Activated CD4-positive, alpha-beta memory T cell treated with anti-CD3 and anti-CD28 coated beads for 36 hours (primary cell): ENCODE measurements at regions of chr20 and their contacts with region 1.

Region 1: GRCh38 chr20:50750145-50750671 is 18.8 kb downstream of the PARD6B start:
- DNase-seq: no peak
- H3K4me3 Mint-ChIP-seq: no peak overlapping the region
- H3K27ac Mint-ChIP-seq: no peak overlapping the region
- H3K4me1 Mint-ChIP-seq: peaks cover 26% of the 10 kb centered on the region
- H3K27me3 Mint-ChIP-seq: no peaks in the 10 kb centered on the region

Region 2: DNA sequence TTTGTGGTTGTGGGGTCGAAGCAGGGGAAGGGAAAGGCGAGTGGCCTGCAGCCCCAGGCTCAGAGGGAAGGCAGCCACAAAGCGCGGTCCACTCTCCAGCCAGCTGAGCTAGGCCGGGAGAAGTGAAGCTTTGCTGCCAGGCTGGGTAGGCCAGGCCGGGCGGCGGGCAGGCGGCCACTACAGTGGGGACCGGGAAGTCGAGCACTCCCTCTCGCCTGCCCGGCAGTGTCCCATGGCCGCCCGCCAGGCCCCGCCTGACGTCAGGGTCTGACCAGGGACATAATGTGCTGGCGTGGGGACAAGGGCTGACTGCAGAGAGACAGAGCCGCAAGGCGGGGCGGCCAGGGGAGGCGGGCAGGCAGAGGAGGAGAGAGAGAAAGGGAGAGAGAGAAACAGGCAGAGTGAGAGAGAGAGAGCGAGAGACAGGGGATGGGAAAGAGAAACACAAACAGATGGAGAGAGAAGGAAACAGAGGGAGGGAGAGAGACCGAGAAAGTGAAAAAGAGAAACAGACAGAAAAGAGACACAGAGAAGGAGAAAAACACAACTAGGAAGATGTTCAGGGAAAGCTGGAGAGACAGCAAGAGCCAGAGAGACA is 334.6 kb before region 1 on chr20:
- CTCF ChIA-PET with region 1: no interaction called
- POLR2A ChIA-PET with region 1: no interaction called
- intact Hi-C with region 1: no loop called
- DNase-seq: no peak
- H3K4me3 Mint-ChIP-seq: no peak overlapping the region
- H3K27ac Mint-ChIP-seq: no peak overlapping the region
- H3K4me1 Mint-ChIP-seq: no peaks in the 10 kb centered on the region
- H3K27me3 Mint-ChIP-seq: peaks cover 10% of the 10 kb centered on the region

Region 3: DNA sequence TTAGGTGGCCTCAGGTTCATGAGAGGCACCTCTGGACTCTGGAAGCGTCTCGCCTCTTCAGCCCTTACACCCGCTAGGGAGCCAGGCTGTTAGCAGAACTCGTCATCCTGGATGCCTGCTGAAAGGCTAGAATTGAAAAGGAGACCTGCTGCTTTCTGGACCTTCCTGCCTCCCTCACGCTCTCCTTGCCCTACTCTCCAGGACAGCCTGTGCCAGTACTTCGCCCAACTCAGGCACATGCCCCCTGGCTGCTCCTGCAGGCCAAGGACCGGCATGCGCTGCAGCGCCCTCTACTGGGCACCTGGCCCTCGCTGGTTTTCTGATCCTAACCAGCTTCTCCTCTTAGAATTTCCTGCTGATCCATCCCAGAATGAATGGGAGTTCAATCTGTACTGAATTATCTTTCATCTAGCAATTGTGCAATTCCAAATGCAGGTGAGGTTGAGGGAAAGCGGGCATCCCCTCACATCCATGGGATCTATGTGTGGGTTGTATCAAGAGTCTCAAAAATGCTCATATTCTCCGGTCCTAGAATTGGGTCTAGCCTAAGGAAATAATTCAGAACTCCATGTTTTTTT is 162.1 kb before region 1 on chr20:
- CTCF ChIA-PET with region 1: interaction called, 15 read pairs
- POLR2A ChIA-PET with region 1: no interaction called
- intact Hi-C with region 1: no loop called
- DNase-seq: peak; percentile 84
- H3K4me3 Mint-ChIP-seq: no peak overlapping the region
- H3K27ac Mint-ChIP-seq: no peak overlapping the region
- H3K4me1 Mint-ChIP-seq: peaks cover 3% of the 10 kb centered on the region
- H3K27me3 Mint-ChIP-seq: no peaks in the 10 kb centered on the region

Region 4: DNA sequence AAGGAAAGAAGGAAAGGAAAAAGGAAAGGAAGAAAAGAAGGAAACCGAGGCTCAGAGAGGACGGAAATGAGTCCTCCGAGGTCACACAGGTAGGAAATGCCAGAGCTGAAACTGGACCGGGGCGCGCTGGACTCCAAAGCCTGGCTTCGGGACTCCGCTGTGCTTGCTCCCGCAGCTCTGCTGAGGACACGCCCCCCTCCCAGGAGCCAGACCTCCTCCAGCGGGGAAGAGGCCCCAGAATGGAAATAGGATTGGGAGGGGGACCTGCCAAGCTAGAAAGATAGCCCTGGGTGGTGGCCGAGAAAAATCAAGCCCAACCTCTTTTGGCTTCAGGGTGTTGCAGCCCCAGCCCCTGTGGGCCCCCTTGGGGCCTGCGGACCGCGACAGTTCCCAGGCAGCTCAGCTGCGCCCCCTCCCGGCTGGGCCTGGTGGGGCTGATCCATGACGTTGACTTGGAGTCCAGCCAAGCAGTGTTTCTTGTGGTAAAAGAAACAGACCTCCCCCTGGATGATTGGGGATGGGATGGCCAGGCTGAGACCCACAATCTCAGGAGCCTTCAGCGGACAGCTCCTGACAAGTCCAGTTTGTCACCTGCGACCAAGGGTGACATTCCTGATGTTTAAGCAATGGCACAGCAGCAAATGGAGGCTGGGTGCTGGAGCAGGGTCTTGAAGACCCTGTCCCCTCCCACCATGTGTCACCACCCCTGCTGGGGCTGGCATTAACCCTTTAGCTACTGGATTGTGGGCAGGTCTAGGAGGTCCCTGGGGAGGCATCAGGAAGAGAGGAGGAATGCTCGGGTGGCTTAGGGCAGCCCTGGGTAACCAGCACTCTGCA is 114.3 kb before region 1 on chr20:
- CTCF ChIA-PET with region 1: interaction called, 10 read pairs
- POLR2A ChIA-PET with region 1: no interaction called
- intact Hi-C with region 1: loop called (anchors 10 kb)
- DNase-seq: peak; percentile 75
- H3K4me3 Mint-ChIP-seq: no peak overlapping the region
- H3K27ac Mint-ChIP-seq: no peak overlapping the region
- H3K4me1 Mint-ChIP-seq: no peaks in the 10 kb centered on the region
- H3K27me3 Mint-ChIP-seq: peaks cover 3% of the 10 kb centered on the region

Region 5: DNA sequence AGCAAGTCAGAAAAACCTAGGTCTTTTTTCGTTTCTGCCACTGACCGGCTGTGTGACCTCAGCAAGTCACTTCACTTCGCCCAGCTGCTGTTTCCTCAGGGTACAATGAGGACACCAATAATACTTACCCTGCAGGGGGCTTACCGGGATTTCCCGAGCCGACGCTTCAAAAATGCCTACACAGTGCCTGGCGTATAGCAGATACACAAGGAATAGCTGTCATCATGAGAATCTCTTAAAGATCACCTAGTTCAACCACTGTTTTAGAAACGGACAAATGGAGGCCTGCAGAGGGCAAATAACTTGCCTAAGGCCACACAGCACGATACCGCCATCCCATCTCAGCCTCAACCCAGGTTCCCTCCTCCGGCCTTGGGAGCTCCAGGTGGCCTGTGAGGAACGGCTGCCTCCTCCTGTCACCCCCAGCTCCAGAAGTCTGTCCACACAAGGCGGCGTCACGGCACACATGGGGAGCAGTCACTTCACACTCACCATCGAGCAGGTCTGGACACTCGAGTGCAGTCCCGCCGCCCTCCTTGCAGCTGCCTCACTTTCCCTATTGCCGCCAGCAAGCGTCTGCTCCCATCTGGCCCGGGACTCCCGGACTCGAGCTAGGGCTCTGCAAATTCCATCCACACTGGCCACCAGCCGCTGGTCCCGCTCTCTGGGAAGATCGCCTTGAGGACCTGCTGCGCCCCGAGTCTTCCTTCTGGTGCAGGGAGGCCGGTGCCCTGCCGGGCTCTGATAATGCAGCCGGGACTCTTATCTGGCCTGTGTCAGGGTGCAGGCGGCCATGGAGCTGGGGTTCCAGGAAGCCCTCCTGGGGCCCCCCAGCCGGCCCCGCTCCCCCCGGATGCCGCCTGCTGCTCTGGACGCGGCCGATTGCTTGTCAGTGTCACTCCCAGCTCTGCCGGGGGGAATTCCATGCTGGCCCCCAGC is 59.3 kb before region 1 on chr20 and contains the start of gene RIPOR3:
- CTCF ChIA-PET with region 1: interaction called, 18 read pairs
- POLR2A ChIA-PET with region 1: no interaction called
- intact Hi-C with region 1: no loop called
- DNase-seq: no peak
- H3K4me3 Mint-ChIP-seq: no peak within 1 kb of the TSS
- H3K27ac Mint-ChIP-seq: no peak within 1 kb of the TSS
- H3K4me1 Mint-ChIP-seq: peaks cover 9% of the 10 kb centered on the region
- H3K27me3 Mint-ChIP-seq: peaks cover 35% of the 10 kb centered on the region
- total RNA-seq, gene RIPOR3: not detected

Region 6: GRCh38 chr20:50731055-50731871 is 18.9 kb before region 1 on chr20 and contains the start of gene PARD6B:
- CTCF ChIA-PET with region 1: interaction called, 21 read pairs
- POLR2A ChIA-PET with region 1: interaction called, 4 read pairs
- intact Hi-C with region 1: loop called (anchors 1 kb)
- DNase-seq: peak; percentile 100
- H3K4me3 Mint-ChIP-seq: peak within 1 kb of the TSS; percentile 87
- H3K27ac Mint-ChIP-seq: peak within 1 kb of the TSS; percentile 65
- H3K4me1 Mint-ChIP-seq: peaks cover 59% of the 10 kb centered on the region
- H3K27me3 Mint-ChIP-seq: no peaks in the 10 kb centered on the region
- total RNA-seq, gene PARD6B: 6.3 to 8.2 TPM

Region 7: GRCh38 chr20:50765674-50766073 is 15.5 kb after region 1 on chr20:
- CTCF ChIA-PET with region 1: interaction called, 10 read pairs
- POLR2A ChIA-PET with region 1: no interaction called
- intact Hi-C with region 1: no loop called
- DNase-seq: no peak
- H3K4me3 Mint-ChIP-seq: no peak overlapping the region
- H3K27ac Mint-ChIP-seq: no peak overlapping the region
- H3K4me1 Mint-ChIP-seq: no peaks in the 10 kb centered on the region
- H3K27me3 Mint-ChIP-seq: peaks cover 1% of the 10 kb centered on the region

Region 8: DNA sequence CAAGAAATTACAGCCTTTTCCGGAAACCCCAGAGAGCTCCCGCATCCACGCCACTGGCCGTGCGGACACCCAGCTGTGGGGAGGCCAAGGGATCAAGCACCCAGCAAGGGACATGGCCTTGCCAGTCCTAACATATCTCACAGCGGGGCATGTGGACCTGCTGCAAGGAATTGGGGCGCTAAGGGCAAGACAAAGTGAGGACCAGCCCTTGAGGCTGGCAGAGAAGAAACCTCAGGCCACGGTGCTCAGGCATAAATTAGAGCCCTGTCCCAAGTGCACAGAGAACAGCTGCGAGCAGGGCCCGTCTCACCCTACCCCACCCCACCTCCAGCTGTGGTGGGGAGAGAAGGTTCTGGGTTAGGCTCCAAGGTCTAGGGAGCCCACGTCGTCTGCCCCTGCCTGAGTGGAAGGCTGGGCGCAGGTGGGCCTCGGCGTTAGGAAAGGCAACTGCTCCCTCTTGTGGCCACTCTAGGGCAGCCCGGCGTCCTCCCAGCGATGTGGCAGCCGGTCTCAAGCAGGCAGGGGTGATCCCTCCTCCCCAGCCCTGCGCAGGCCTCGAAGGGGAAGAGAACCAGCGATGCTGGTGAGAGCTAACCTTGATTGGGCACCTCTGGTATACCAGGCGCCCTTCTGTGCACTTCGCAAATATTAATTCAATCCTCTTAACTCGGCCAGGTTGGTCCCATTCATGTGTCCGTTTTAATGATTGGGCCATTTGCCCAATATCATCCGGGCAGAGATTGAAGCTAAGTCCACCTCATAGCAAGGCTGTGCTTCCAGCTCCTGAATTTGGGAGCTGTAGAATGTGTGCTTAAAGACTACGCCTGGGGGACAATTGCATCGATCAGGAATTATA is 556.5 kb after region 1 on chr20:
- CTCF ChIA-PET with region 1: no interaction called
- POLR2A ChIA-PET with region 1: no interaction called
- intact Hi-C with region 1: no loop called
- DNase-seq: peak; percentile 81
- H3K4me3 Mint-ChIP-seq: no peak overlapping the region
- H3K27ac Mint-ChIP-seq: no peak overlapping the region
- H3K4me1 Mint-ChIP-seq: no peaks in the 10 kb centered on the region
- H3K27me3 Mint-ChIP-seq: peaks cover 6% of the 10 kb centered on the region